ENCODE measurements at regions of chr10 and their contacts with region 1.

Region 1: DNA sequence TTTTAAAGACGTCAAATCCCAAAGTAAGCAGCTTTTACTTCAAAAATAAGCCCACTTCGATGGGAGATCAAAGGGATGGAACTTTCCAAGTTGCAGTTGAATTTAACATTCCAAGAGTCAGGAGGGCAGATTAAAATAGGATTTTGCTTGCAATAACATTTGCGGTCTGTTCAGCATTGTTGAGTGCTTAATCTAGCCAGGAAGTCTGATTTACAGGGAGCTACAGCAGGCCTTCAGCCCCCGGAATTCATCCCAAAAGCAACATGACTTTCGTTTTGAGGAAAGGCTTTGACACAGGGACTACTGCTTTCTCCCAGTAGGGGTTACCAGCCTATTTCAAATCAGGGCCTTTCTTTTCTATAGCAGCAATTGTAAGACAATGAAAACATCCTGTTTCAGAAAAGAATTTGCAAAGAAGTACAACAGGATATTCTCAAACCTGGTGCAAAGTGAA is 279.6 kb upstream of the PITRM1 start:
- DNase-seq: peak in 1 of 5 donors; percentile 50
- ATAC-seq: peak; percentile 62 to 92 (median 79)
- H3K4me3 ChIP-seq: peak overlapping the region in 3 of 12 donors; percentile 1 to 20 (median 15)
- H3K27ac ChIP-seq: peak overlapping the region; percentile 53 to 88 (median 76)
- H3K4me1 ChIP-seq: peaks cover 0 to 36% (median 21%) of the 10 kb centered on the region in 12 donors
- H3K27me3 ChIP-seq: no peaks in the 10 kb centered on the region
- CTCF ChIP-seq: peak; percentile 30 to 68 (median 47)
- POLR2A ChIP-seq: no peak

Region 2: GRCh38 chr10:3248888-3249758 is 203.1 kb before region 1 on chr10:
- intact Hi-C with region 1: loop called in 1 of 10 experiments (anchors 10 kb)
- DNase-seq: no peak
- ATAC-seq: peak in 3 of 4 donors; percentile 77 to 92 (median 79)
- H3K4me3 ChIP-seq: no peak overlapping the region
- H3K27ac ChIP-seq: peak overlapping the region in 7 of 12 donors; percentile 15 to 61 (median 48)
- H3K4me1 ChIP-seq: peaks cover 0 to 5% (median 0%) of the 10 kb centered on the region in 12 donors
- H3K27me3 ChIP-seq: no peaks in the 10 kb centered on the region
- CTCF ChIP-seq: no peak
- POLR2A ChIP-seq: no peak

Region 3: GRCh38 chr10:3294928-3295327 is 157.3 kb before region 1 on chr10:
- intact Hi-C with region 1: no loop called
- DNase-seq: no peak
- ATAC-seq: no peak
- H3K4me3 ChIP-seq: no peak overlapping the region
- H3K27ac ChIP-seq: no peak overlapping the region
- H3K4me1 ChIP-seq: no peaks in the 10 kb centered on the region
- H3K27me3 ChIP-seq: no peaks in the 10 kb centered on the region
- CTCF ChIP-seq: no peak
- POLR2A ChIP-seq: no peak

Region 4: GRCh38 chr10:3398825-3399646 is 53.2 kb before region 1 on chr10:
- intact Hi-C with region 1: loop called in 1 of 10 experiments (anchors 5 kb)
- DNase-seq: peak in 4 of 5 donors; percentile 40 to 65 (median 54)
- ATAC-seq: peak in 3 of 4 donors; percentile 76 to 86 (median 81)
- H3K4me3 ChIP-seq: no peak overlapping the region
- H3K27ac ChIP-seq: peak overlapping the region in 7 of 12 donors; percentile 1 to 62 (median 41)
- H3K4me1 ChIP-seq: peaks cover 0 to 16% (median 9%) of the 10 kb centered on the region in 12 donors
- H3K27me3 ChIP-seq: no peaks in the 10 kb centered on the region
- CTCF ChIP-seq: no peak
- POLR2A ChIP-seq: no peak

Region 5: DNA sequence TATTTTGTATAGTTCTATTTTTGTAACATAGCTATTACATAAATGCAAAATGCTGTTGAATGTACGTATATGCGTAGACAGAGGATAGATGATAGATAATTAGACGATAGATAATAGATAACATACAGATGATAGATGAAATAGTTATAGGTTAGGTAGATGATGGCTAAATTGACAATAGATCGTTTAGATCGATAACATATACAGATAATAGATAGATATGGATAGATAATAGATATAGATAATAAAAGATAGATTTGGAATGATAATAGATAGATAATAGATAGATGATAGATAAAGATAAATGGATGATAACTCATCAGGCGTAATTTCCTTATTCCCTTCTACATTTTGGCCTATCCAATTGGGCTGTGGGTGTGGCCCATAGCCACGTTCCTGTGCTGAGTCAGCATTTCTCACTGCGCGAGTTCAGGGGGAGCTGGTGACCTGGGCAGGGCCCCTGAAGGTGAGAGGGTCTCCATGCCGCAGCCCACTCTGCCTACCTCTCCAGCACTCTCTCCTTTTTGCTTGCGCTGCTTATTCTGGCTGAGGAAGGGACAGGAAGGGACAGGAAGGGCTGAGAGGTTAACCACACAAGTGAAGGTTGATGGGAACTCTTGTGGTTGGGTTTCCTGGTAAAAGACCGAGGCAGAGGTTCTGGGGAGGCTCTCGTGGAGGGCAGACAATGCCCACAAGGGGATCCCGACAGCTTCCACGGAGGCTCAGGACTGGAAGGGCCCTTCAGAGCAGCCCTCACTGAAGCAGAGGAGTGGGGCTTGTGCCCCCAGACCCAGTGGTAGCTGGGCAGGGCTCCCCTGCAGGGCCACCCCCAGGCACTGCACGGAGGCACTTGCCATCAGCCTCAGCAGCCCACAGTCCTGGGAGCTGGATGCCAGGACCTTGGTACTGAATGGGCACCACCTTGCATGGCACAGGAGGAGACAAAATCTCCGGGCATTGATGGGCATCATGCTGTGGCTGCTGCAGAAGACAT is 32.4 kb before region 1 on chr10:
- intact Hi-C with region 1: no loop called
- DNase-seq: no peak
- ATAC-seq: no peak
- H3K4me3 ChIP-seq: no peak overlapping the region
- H3K27ac ChIP-seq: no peak overlapping the region
- H3K4me1 ChIP-seq: peaks cover 0 to 37% (median 7%) of the 10 kb centered on the region in 12 donors
- H3K27me3 ChIP-seq: no peaks in the 10 kb centered on the region
- CTCF ChIP-seq: no peak
- POLR2A ChIP-seq: no peak

Region 6: GRCh38 chr10:3776796-3777571 is 324.8 kb after region 1 on chr10:
- intact Hi-C with region 1: loop called in 3 of 10 experiments (anchors 5 to 10 kb)
- DNase-seq: peak in 3 of 5 donors; percentile 49 to 61 (median 51)
- ATAC-seq: peak in 3 of 4 donors; percentile 30 to 36 (median 34)
- H3K4me3 ChIP-seq: peak overlapping the region in 2 of 12 donors; percentile 2 to 100
- H3K27ac ChIP-seq: peak overlapping the region in 11 of 12 donors; percentile 66 to 100 (median 99)
- H3K4me1 ChIP-seq: peaks cover 23 to 78% (median 72%) of the 10 kb centered on the region in 12 donors
- H3K27me3 ChIP-seq: no peaks in the 10 kb centered on the region
- CTCF ChIP-seq: no peak
- POLR2A ChIP-seq: no peak

Measured in heart left ventricle (tissue), 16 donors.